A673 (cell line): ENCODE measurements at regions of chr15 and their contacts with region 1.

Region 1: DNA sequence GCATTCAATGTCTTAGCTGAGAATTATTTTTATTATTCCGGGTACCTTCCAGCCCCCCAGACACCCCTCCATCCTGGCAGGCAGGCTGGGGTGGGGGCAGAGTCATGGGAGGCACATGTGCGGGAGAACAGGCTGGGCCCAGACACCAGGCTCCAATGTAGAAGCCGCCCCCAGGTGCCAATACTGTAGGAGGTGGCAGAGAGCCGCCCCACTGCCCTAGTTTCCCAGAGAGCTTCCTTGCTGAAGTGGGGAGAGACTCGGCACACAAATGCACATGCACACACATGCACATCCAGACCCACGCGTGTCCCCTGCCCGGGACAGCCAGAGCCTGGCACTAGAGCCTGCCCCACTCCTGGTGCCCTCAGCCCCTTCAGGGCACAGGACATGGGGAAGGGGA is 98.4 kb upstream of the LINGO1 start:
- DNase-seq: no peak
- H3K4me3 ChIP-seq: no peak overlapping the region
- H3K27ac ChIP-seq: peak overlapping the region; percentile 44
- H3K4me1 ChIP-seq: peaks cover 26% of the 10 kb centered on the region
- H3K27me3 ChIP-seq: no peaks in the 10 kb centered on the region
- CTCF ChIP-seq: no peak

Region 2: DNA sequence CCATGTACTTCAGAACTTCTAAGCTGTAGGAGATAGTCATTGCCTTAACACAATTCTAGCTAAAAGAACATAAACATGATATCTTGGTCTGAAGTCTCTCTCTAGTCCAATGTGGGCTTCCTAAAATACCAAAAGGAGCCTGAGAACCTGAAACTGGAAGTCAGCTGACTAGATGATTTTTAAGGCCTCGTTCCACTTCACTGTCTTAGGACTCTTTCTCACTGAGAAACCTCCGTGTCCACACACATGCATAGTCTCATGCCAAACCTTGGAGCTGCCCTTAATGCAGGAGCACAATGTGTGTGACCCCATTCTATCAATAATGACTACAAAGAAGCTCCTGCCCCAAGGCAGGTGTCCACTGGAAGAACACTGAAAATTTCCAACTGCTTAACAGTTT is 1507.5 kb before region 1 on chr15:
- CTCF ChIA-PET with region 1: no interaction called
- POLR2A ChIA-PET with region 1: interaction called, 13 read pairs
- intact Hi-C with region 1: no loop called
- DNase-seq: no peak
- H3K4me3 ChIP-seq: no peak overlapping the region
- H3K27ac ChIP-seq: no peak overlapping the region
- H3K4me1 ChIP-seq: no peaks in the 10 kb centered on the region
- H3K27me3 ChIP-seq: no peaks in the 10 kb centered on the region
- CTCF ChIP-seq: no peak

Region 3: DNA sequence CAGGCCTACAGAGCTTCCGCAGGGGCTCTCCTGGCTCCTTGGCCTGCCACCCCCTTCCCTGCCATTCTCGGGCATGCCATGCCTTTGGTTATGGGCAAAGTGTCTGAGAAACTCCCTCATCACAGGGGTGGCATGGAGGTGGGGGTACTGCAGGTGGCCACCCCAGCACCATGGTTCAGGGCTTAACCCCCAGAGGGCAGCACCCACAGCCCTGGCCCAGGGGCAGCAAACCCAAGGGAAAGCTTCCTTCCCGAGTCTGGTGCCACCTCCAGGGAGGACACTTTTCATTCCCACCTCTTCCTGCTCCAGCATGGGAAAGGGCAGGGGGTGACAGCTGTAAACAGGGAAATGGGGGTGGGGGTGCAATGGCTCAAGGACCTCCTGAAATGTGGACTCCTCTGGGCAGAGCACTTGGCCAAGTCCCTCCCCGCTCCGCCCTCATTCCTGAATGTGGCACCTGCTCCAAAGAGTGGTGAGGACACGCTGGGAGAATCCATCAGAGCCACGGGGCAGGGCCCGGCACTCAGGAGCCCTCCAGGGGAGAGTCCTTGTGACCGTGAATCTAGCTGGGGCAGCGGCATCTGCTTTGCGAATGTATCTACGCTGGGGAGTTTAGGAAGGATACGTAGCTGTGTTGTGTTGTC is 87.4 kb before region 1 on chr15:
- CTCF ChIA-PET with region 1: no interaction called
- POLR2A ChIA-PET with region 1: no interaction called
- intact Hi-C with region 1: no loop called
- DNase-seq: no peak
- H3K4me3 ChIP-seq: no peak overlapping the region
- H3K27ac ChIP-seq: no peak overlapping the region
- H3K4me1 ChIP-seq: no peaks in the 10 kb centered on the region
- H3K27me3 ChIP-seq: no peaks in the 10 kb centered on the region
- CTCF ChIP-seq: no peak